SK-N-SH (cell line): ENCODE measurements at regions of chr2 and their contacts with region 1.

Region 1: DNA sequence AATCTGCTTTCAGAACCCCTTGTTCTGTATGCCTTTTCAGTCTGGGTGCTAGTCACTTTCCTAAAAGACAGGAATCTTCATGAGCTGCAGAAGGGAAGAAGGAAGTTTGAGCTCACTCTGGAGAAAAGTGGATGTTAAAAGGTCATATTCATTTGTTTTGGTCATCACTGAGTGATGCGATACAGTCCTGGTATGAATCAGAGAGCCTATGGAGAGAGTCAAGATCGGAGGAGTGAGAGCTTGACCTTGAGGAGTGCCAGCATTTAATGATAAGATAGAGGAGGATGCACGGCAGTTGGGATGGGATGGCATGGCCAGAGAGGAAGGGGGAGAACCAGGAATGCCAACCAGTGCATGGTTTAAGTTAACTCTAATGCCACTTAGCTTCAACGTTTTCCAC is 19.6 kb downstream of the USP39 start:
- DNase-seq: no peak
- H3K4me3 ChIP-seq: no peak overlapping the region
- H3K27ac ChIP-seq: peak overlapping the region in 1 of 2 experiments; percentile 13; a peak in 1 of 4 replicates
- H3K4me1 ChIP-seq: no peaks in the 10 kb centered on the region
- H3K27me3 ChIP-seq: no peaks in the 10 kb centered on the region
- CTCF ChIP-seq: no peak
- EP300 ChIP-seq: no peak
- RAD21 ChIP-seq: no peak

Region 2: DNA sequence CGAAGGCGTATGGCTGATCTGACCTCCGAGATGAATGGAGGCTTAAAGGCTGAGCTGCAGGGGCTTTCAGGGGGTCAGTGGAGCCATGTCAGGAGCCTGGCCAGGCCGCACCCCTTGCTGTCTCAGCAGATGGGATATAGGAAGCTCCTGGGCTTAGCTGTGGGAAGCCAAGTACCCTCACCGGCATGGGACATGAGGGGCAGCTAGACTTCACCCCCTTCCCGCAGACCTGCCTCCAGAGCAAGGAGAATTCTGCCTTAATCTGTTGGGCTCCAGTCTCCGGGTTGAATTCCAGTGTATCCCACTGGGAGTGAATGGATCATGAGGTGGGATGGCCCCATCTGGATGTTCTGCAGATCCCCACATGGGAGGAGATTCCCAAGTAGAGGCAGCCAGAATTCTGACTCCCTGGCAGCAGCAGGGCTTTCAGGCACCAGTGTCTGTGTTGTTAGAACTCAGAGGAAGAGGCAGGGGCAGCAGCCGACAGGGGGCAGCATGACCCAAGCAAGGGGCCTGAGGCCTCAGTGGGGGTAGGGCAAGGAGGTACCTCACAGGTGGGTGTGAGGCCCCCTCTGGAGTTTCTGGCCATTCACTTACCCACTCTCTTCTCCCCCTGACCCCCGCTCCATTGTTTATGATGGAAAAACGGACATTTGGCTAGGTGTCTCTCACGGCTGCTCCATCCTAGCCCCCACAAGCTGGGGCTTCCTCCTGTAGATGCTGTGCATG is 244.5 kb before region 1 on chr2:
- CTCF ChIA-PET with region 1: no interaction called
- POLR2A ChIA-PET with region 1: no interaction called
- DNase-seq: peak; percentile 60
- H3K4me3 ChIP-seq: no peak overlapping the region
- H3K27ac ChIP-seq: no peak overlapping the region
- H3K4me1 ChIP-seq: peaks cover 0 to 13% of the 10 kb centered on the region in 2 experiments; a peak in 1 of 4 replicates
- H3K27me3 ChIP-seq: no peaks in the 10 kb centered on the region
- CTCF ChIP-seq: peak; percentile 53
- EP300 ChIP-seq: no peak
- RAD21 ChIP-seq: peak; percentile 73

Region 3: GRCh38 chr2:85475799-85476490 is 159.7 kb before region 1 on chr2:
- CTCF ChIA-PET with region 1: no interaction called
- POLR2A ChIA-PET with region 1: no interaction called
- DNase-seq: no peak
- H3K4me3 ChIP-seq: no peak overlapping the region
- H3K27ac ChIP-seq: no peak overlapping the region
- H3K4me1 ChIP-seq: peaks cover 0 to 4% of the 10 kb centered on the region in 2 experiments; a peak in 1 of 4 replicates
- H3K27me3 ChIP-seq: no peaks in the 10 kb centered on the region
- CTCF ChIP-seq: no peak
- EP300 ChIP-seq: no peak
- RAD21 ChIP-seq: no peak

Region 4: DNA sequence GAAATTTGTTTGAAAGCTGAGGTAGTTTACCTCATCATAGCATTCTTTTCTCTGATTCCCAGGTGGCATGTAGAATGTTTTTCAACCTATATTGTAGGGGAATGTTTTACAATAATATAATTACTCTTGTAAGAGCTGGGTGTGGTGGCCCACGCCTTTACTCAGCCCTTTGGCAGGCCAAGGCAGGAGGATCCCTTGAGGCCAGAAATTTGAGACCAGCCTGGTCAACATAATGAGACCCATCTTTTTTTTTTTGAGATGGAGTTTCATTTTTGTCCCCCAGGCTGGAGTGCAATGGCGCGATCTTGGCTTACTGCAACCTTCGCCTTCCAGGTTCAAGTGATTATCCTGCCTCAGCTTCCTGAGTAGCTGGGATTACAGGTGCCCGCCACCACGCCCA is 16.0 kb before region 1 on chr2:
- CTCF ChIA-PET with region 1: interaction called, 59 read pairs
- POLR2A ChIA-PET with region 1: interaction called, 6 read pairs
- DNase-seq: no peak
- H3K4me3 ChIP-seq: no peak overlapping the region
- H3K27ac ChIP-seq: no peak overlapping the region
- H3K4me1 ChIP-seq: peaks cover 9% of the 10 kb centered on the region in 2 experiments; a peak in 3 of 4 replicates
- H3K27me3 ChIP-seq: no peaks in the 10 kb centered on the region
- CTCF ChIP-seq: no peak
- EP300 ChIP-seq: no peak
- RAD21 ChIP-seq: no peak

Region 5: DNA sequence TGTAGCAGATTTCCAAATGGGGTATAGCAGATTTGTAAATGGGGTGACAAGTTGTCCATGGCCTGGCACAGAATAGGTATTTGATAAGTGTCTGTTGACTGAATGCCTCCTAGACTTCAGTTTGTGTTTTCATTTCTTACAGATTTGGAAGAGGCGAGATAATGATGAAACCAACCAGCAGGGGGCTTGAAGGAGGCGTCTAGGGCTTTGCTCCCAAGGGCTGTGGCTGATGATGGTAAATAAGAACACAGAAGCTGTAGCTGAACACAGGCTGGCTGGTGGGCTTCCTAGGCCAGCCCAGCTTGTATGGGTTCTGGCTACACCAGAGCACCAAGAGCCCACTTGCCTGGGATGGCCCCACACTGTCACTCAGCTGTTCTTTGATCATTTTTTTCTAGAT is 13.0 kb after region 1 on chr2:
- CTCF ChIA-PET with region 1: interaction called, 62 read pairs
- POLR2A ChIA-PET with region 1: interaction called, 3 read pairs
- DNase-seq: peak; percentile 49
- H3K4me3 ChIP-seq: no peak overlapping the region
- H3K27ac ChIP-seq: peak overlapping the region in 1 of 2 experiments; percentile 54; a peak in 2 of 4 replicates
- H3K4me1 ChIP-seq: peaks cover 0 to 12% of the 10 kb centered on the region in 2 experiments; a peak in 1 of 4 replicates
- H3K27me3 ChIP-seq: no peaks in the 10 kb centered on the region
- CTCF ChIP-seq: peak; percentile 66
- EP300 ChIP-seq: no peak
- RAD21 ChIP-seq: peak; percentile 36

Region 6: DNA sequence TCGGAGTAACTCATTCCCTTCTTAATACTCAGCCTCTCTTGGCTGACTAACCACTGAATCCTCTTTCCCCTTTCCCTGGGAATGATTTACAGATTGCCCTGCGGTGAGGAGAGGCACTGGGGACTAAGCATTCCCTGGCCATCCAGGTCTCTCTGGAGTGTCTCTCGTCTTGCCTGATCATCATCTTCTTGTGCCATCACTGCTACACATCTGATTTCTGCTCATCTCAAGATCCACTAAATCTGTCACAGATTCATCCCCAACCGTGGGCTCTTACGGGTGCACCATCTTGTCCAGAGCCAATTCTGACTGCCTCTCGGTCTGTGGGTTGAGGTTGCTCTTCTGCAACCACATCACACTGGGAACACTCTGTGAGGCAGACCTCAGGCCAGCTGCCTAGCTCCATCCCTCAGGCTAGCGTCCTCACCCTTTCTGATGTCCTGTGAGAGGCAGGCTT is 20.4 kb after region 1 on chr2:
- CTCF ChIA-PET with region 1: interaction called, 62 read pairs
- POLR2A ChIA-PET with region 1: interaction called, 7 read pairs
- DNase-seq: no peak
- H3K4me3 ChIP-seq: no peak overlapping the region
- H3K27ac ChIP-seq: peak overlapping the region in 1 of 2 experiments; percentile 38; a peak in 2 of 4 replicates
- H3K4me1 ChIP-seq: no peaks in the 10 kb centered on the region
- H3K27me3 ChIP-seq: no peaks in the 10 kb centered on the region
- CTCF ChIP-seq: no peak
- EP300 ChIP-seq: no peak
- RAD21 ChIP-seq: no peak

Region 7: DNA sequence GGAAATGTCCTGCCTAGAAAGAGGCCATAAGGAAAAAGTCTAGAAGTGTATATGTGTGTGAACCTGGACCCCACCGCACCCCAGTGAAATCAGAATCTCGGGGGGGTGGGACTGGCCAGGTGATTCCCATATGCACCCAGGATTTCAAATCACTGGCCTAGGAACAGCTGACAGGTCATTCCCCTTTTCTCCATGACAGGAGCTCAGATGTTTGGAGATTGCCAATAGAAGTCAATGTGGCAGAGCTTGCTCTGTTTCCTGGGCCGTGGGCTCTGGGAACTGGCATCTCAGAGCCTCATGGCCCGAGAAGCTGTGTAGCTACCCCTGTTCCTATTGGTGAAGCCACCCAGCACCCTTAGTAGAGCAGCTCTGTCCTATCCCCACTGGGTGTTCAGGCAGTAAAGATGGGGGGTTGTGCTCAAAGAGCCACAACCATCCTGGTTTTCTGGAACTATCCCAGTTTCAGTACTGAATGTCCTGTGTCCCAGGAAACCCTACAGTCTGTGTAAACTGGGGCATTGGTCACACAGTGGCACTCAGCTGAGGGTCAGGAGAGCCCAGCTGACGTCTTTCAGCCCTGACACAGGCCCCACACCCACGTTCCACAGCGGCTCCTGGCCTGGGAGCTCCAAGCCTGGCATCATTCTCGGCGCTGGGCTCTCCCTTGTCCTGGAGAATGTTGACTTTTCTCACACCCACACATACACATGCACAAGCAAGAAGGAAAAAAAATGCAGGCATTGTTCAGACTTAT is 77.4 kb after region 1 on chr2:
- CTCF ChIA-PET with region 1: interaction called, 85 read pairs
- POLR2A ChIA-PET with region 1: no interaction called
- DNase-seq: no peak
- H3K4me3 ChIP-seq: no peak overlapping the region
- H3K27ac ChIP-seq: no peak overlapping the region
- H3K4me1 ChIP-seq: peaks cover 9 to 16% of the 10 kb centered on the region in 2 experiments; a peak in 3 of 4 replicates
- H3K27me3 ChIP-seq: no peaks in the 10 kb centered on the region
- CTCF ChIP-seq: no peak
- EP300 ChIP-seq: no peak
- RAD21 ChIP-seq: no peak